Tibial artery (tissue), 4 donors: ENCODE measurements at regions of chr15 and their contacts with region 1.

Region 1: DNA sequence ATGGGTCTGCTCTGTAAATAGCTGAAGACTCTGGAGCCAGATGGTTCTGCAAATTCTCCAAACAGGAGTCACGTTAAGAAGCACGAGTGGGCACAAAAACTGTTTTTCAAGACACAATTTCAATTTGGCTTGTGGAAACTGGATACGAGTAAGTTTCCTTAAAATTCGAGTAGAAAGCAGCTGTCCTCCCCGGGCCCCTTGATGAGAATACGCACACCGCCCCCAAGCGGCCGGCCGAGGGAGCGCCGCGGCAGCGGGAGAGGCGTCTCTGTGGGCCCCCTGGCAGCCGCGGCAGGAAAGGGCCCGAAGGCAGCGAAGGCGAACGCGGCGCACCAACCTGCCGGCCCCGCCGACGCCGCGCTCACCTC is 778 bp upstream of the THBS1 start:
- DNase-seq: peak; percentile 98
- H3K4me3 ChIP-seq: peak overlapping the region; percentile 69
- H3K27ac ChIP-seq: peak overlapping the region; percentile 77 to 92
- H3K4me1 ChIP-seq: peaks cover 0 to 49% (median 25%) of the 10 kb centered on the region in 4 donors
- H3K27me3 ChIP-seq: no peaks in the 10 kb centered on the region
- CTCF ChIP-seq: peak; percentile 98 to 99

Region 2: GRCh38 chr15:38707802-38708671 is 872.1 kb before region 1 on chr15:
- intact Hi-C with region 1: loop called (anchors 1 kb)
- DNase-seq: no peak
- H3K4me3 ChIP-seq: no peak overlapping the region
- H3K27ac ChIP-seq: no peak overlapping the region
- H3K4me1 ChIP-seq: no peaks in the 10 kb centered on the region
- H3K27me3 ChIP-seq: peaks cover 0 to 13% of the 10 kb centered on the region in 2 donors
- CTCF ChIP-seq: peak; percentile 62 to 70

Region 3: GRCh38 chr15:38817427-38818156 is 762.5 kb before region 1 on chr15:
- intact Hi-C with region 1: loop called (anchors 5 kb)
- DNase-seq: peak; percentile 85 to 88
- H3K4me3 ChIP-seq: no peak overlapping the region
- H3K27ac ChIP-seq: no peak overlapping the region
- H3K4me1 ChIP-seq: peaks cover 0 to 6% (median 5%) of the 10 kb centered on the region in 4 donors
- H3K27me3 ChIP-seq: no peaks in the 10 kb centered on the region
- CTCF ChIP-seq: peak; percentile 99

Region 4: GRCh38 chr15:39125904-39126303 is 454.2 kb before region 1 on chr15:
- intact Hi-C with region 1: loop called (anchors 5 kb)
- DNase-seq: no peak
- H3K4me3 ChIP-seq: no peak overlapping the region
- H3K27ac ChIP-seq: no peak overlapping the region
- H3K4me1 ChIP-seq: peaks cover 0 to 38% (median 13%) of the 10 kb centered on the region in 4 donors
- H3K27me3 ChIP-seq: no peaks in the 10 kb centered on the region
- CTCF ChIP-seq: peak; percentile 36 to 41

Region 5: DNA sequence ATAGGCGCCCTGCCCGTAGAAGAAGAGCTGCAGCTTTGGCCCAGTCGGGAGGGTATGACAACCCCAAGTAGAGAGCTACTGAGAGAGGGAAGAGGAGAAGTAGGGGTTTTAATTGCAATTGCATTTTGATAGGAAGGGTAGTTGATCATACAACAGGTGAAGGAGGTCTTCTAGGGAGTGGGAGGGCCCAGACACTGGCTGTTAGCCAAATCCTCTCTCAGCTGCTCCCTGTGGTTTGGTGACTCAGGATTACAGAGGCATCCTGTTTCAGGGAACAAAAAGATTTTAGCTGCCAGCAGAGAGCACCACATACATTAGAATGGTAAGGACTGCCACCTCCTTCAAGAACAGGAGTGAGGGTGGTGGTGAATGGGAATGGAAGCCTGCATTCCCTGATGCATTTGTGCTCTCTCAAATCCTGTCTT is 408.1 kb before region 1 on chr15:
- intact Hi-C with region 1: loop called (anchors 2 kb)
- DNase-seq: peak; percentile 39 to 69
- H3K4me3 ChIP-seq: no peak overlapping the region
- H3K27ac ChIP-seq: no peak overlapping the region
- H3K4me1 ChIP-seq: peaks cover 0 to 29% (median 7%) of the 10 kb centered on the region in 4 donors
- H3K27me3 ChIP-seq: no peaks in the 10 kb centered on the region
- CTCF ChIP-seq: peak; percentile 34 to 44

Region 6: GRCh38 chr15:39344662-39345141 is 235.4 kb before region 1 on chr15:
- intact Hi-C with region 1: no loop called
- DNase-seq: no peak
- H3K4me3 ChIP-seq: no peak overlapping the region
- H3K27ac ChIP-seq: no peak overlapping the region
- H3K4me1 ChIP-seq: no peaks in the 10 kb centered on the region
- H3K27me3 ChIP-seq: no peaks in the 10 kb centered on the region
- CTCF ChIP-seq: no peak

Region 7: GRCh38 chr15:39511000-39511915 is 68.8 kb before region 1 on chr15:
- intact Hi-C with region 1: loop called (anchors 10 kb)
- DNase-seq: peak; percentile 58 to 85
- H3K4me3 ChIP-seq: no peak overlapping the region
- H3K27ac ChIP-seq: peak overlapping the region in 1 of 2 donors; percentile 48
- H3K4me1 ChIP-seq: peaks cover 0 to 11% (median 10%) of the 10 kb centered on the region in 4 donors
- H3K27me3 ChIP-seq: no peaks in the 10 kb centered on the region
- CTCF ChIP-seq: no peak

Region 8: GRCh38 chr15:39756806-39757522 is 176.9 kb after region 1 on chr15:
- intact Hi-C with region 1: loop called (anchors 10 kb)
- DNase-seq: no peak
- H3K4me3 ChIP-seq: no peak overlapping the region
- H3K27ac ChIP-seq: no peak overlapping the region
- H3K4me1 ChIP-seq: no peaks in the 10 kb centered on the region
- H3K27me3 ChIP-seq: no peaks in the 10 kb centered on the region
- CTCF ChIP-seq: peak; percentile 71 to 83